CD4-positive, alpha-beta memory T cell (primary cell): ENCODE measurements at regions of chr20 and their contacts with region 1.

Region 1: DNA sequence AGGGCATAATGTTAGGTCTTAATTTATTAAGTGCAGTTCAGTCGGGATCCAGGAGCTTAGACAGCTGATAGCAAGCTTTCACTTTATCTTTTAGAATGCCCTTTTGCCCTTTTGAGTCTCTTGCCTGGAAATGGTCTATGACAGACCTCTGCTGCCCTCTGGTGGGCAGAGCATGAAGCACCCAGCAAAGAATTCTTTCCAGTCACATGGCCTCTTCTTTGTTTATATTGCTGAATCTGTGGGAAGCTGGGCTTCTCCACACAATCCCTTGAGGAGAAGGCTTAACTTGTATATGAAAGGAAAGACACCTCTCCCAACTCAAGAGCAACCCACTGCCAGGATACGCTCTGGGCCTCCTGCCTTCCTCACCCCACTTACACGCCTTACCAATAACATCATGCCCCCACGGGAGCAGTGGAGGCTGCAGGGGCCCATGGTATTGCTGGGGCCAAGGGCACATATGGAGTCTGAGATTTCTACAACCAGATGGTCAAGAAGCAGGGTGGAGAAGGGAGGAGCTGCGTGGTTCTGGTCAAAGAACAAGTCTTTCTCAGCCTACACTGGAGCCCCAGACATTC is 20.4 kb downstream of the WFDC3 start:
- DNase-seq: peak; percentile 73 to 79 (median 75)
- H3K4me3 ChIP-seq: no peak overlapping the region
- H3K4me3 Mint-ChIP-seq: peak overlapping the region in 1 of 8 donors; percentile 21
- H3K27ac ChIP-seq: no peak overlapping the region
- H3K27ac Mint-ChIP-seq: peak overlapping the region in 1 of 7 donors; percentile 61
- H3K4me1 ChIP-seq: no peaks in the 10 kb centered on the region
- H3K4me1 Mint-ChIP-seq: peaks cover 1 to 7% (median 4%) of the 10 kb centered on the region in 4 donors
- H3K27me3 ChIP-seq: no peaks in the 10 kb centered on the region
- H3K27me3 Mint-ChIP-seq: peaks cover 10 to 23% of the 10 kb centered on the region in 2 donors

Region 2: DNA sequence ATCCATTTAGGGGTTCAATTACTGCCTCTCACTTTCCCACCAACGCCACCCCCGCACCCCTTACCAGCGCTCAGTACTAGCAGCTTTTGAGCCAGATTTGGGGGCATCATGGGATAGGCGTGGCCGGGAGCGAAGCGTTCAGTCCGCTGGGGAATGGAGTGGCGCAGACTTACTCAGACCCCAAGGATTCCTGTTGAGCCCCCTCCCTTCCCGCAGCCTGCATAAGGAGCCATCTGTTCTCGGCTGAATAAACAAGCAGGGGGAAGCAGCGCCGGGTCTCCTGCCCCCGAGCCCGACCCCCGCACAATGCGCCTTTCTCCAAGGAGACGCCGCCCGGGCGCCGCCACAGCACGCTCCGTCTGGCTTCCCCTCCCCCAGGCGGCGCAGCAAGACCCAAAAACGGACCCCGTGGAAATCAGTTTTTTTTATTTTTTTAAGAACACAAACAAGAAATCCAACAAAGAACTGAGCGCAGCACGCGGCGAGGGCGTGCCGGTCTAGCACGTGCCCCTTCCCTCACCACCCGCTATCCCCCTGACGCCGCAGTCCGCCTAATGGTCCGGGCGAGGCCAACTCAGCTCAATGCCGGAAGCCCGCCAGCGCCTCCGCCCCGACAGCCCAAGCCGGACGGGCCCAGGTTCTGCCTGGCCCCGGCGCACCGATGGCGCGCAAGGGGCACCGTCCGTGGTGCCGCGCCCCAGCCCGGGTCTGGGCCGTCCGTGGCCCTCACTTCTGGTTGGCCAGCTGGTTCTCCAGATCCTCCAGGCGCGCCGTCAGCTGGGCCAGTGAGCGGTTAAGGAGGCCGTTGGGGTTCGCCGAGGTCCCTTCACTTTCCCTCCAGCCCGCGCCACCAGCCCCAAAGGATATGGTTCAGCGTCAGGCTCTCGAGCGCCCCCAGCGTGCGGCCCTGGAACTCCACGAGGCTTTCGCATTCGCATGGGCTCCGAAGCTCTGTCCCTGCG is 477.9 kb before region 1 on chr20:
- CTCF ChIA-PET with region 1: interaction called, 12 read pairs
- POLR2A ChIA-PET with region 1: no interaction called
- intact Hi-C with region 1: no loop called
- DNase-seq: peak; percentile 70 to 77 (median 71)
- H3K4me3 ChIP-seq: peak overlapping the region; percentile 40 to 64
- H3K4me3 Mint-ChIP-seq: peak overlapping the region; percentile 68 to 84 (median 79)
- H3K27ac ChIP-seq: no peak overlapping the region
- H3K27ac Mint-ChIP-seq: no peak overlapping the region
- H3K4me1 ChIP-seq: peaks cover 11% of the 10 kb centered on the region
- H3K4me1 Mint-ChIP-seq: peaks cover 2 to 8% (median 4%) of the 10 kb centered on the region in 4 donors
- H3K27me3 ChIP-seq: no peaks in the 10 kb centered on the region
- H3K27me3 Mint-ChIP-seq: peaks cover 9 to 30% of the 10 kb centered on the region in 2 donors

Region 3: DNA sequence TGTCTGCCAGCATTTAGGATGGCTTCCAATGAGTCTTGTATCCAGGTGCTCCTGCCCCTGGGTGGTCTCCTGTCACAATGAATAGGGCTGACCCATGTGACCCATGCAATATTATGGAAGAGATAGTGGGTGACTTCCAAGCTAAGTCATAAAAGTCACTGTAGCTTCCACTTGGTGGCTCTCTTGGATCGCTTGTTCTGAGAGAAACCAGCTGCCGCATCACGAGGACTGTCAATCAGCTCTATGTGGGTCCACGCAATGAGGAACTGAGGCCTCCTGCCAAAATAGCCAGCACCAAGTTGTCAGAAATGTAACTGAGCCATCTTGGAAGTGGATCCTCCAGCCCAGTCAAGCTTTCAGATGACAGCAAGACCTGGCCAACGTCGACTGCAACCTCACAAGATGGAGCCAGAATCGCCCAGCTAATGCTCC is 448.3 kb before region 1 on chr20:
- CTCF ChIA-PET with region 1: interaction called, 125 read pairs
- POLR2A ChIA-PET with region 1: interaction called, 4 read pairs
- intact Hi-C with region 1: no loop called
- DNase-seq: no peak
- H3K4me3 ChIP-seq: no peak overlapping the region
- H3K4me3 Mint-ChIP-seq: no peak overlapping the region
- H3K27ac ChIP-seq: no peak overlapping the region
- H3K27ac Mint-ChIP-seq: no peak overlapping the region
- H3K4me1 ChIP-seq: peaks cover 29% of the 10 kb centered on the region
- H3K4me1 Mint-ChIP-seq: peaks cover 13 to 32% (median 22%) of the 10 kb centered on the region in 4 donors
- H3K27me3 ChIP-seq: no peaks in the 10 kb centered on the region
- H3K27me3 Mint-ChIP-seq: no peaks in the 10 kb centered on the region

Region 4: DNA sequence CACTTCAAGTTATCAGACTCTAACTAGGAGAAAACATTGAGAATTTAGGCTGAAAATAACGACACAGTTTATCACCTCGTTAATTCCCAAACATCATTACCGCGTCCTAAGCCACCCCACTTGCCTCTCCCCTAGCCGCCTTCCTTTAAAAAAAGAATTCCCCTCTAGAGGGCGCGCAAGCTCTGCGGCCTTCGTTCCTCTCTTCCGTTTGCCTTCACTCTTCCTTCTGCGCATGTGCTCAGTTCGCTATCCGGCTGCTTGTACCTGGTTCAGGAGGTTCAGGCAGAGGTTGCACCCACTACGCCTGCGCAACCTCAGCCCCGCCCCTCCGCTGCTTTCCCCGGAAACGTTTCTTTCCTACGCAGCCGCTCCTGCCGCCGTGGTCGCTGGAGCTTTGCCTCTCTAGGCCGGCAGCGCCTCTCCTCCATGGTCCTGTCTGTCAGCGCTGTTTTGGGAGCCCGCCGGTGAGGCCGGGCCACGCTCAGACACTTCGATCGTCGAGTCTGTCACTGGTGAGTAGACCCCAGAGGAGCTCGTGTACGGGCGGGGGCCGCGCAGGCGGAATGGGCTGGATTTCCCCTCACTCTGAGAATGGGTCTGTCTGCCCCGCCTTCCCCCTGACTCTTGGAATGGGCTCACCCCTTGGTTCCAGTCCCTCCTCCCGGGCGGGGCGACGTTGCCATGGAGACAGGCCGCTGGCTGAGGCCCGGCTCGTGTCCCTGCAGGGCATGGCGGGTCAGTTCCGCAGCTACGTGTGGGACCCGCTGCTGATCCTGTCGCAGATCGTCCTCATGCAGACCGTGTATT is 408.3 kb before region 1 on chr20 and contains the start of gene SYS1:
- CTCF ChIA-PET with region 1: interaction called, 16 read pairs
- POLR2A ChIA-PET with region 1: interaction called, 12 read pairs
- intact Hi-C with region 1: loop called (anchors 1 kb)
- DNase-seq: peak; percentile 98 to 99 (median 99)
- H3K4me3 ChIP-seq: peak within 1 kb of the TSS; percentile 67 to 83
- H3K4me3 Mint-ChIP-seq: peak within 1 kb of the TSS; percentile 95 to 99 (median 98)
- H3K27ac ChIP-seq: peak within 1 kb of the TSS; percentile 97
- H3K27ac Mint-ChIP-seq: peak within 1 kb of the TSS; percentile 98 to 100 (median 100)
- H3K4me1 ChIP-seq: peaks cover 41% of the 10 kb centered on the region
- H3K4me1 Mint-ChIP-seq: peaks cover 28 to 59% (median 52%) of the 10 kb centered on the region in 4 donors
- H3K27me3 ChIP-seq: no peaks in the 10 kb centered on the region
- H3K27me3 Mint-ChIP-seq: no peaks in the 10 kb centered on the region
- total RNA-seq, gene SYS1: 56.4 to 56.6 TPM

Region 5: GRCh38 chr20:45576995-45577394 is 194.3 kb before region 1 on chr20:
- CTCF ChIA-PET with region 1: no interaction called
- POLR2A ChIA-PET with region 1: no interaction called
- intact Hi-C with region 1: no loop called
- DNase-seq: no peak
- H3K4me3 ChIP-seq: no peak overlapping the region
- H3K4me3 Mint-ChIP-seq: no peak overlapping the region
- H3K27ac ChIP-seq: no peak overlapping the region
- H3K27ac Mint-ChIP-seq: no peak overlapping the region
- H3K4me1 ChIP-seq: no peaks in the 10 kb centered on the region
- H3K4me1 Mint-ChIP-seq: no peaks in the 10 kb centered on the region
- H3K27me3 ChIP-seq: no peaks in the 10 kb centered on the region
- H3K27me3 Mint-ChIP-seq: peaks cover 9 to 16% of the 10 kb centered on the region in 2 donors

Region 6: DNA sequence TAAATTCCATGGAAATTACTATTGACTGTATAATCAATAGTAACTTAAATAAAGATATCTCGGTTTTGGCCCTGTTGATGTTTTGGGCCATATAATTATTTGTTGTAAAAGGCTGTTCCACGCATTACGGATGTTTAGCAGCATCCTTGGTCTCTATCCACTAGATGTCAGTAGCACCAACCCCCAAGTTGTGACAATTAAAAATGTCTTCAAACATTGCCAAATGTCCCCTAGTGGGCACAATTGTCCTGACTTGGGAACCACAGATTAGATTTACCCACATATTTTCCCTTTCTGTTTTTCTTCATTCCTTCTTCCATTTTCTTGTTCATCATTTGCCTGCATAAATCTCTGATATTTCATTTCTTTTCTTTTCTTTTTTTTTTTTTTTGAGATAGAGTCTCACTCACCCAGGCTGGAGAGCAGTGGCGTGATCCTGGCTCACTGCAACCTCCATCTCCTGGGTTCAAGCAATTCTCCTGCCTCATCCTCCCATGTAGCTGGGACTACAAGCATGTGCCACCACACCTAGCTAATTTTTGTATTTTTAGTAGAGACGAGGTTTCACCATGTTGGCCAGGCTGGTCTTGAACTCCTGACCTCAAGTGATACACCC is 178.6 kb before region 1 on chr20:
- CTCF ChIA-PET with region 1: interaction called, 5 read pairs
- POLR2A ChIA-PET with region 1: no interaction called
- intact Hi-C with region 1: loop called (anchors 1 kb)
- DNase-seq: peak in 4 of 5 donors; percentile 0 to 22 (median 20)
- H3K4me3 ChIP-seq: no peak overlapping the region
- H3K4me3 Mint-ChIP-seq: no peak overlapping the region
- H3K27ac ChIP-seq: no peak overlapping the region
- H3K27ac Mint-ChIP-seq: no peak overlapping the region
- H3K4me1 ChIP-seq: no peaks in the 10 kb centered on the region
- H3K4me1 Mint-ChIP-seq: no peaks in the 10 kb centered on the region
- H3K27me3 ChIP-seq: no peaks in the 10 kb centered on the region
- H3K27me3 Mint-ChIP-seq: peaks cover 30 to 32% of the 10 kb centered on the region in 2 donors